Pancreas (tissue), 10 donors: ENCODE measurements at regions of chr17 and their contacts with region 1.

Region 1: DNA sequence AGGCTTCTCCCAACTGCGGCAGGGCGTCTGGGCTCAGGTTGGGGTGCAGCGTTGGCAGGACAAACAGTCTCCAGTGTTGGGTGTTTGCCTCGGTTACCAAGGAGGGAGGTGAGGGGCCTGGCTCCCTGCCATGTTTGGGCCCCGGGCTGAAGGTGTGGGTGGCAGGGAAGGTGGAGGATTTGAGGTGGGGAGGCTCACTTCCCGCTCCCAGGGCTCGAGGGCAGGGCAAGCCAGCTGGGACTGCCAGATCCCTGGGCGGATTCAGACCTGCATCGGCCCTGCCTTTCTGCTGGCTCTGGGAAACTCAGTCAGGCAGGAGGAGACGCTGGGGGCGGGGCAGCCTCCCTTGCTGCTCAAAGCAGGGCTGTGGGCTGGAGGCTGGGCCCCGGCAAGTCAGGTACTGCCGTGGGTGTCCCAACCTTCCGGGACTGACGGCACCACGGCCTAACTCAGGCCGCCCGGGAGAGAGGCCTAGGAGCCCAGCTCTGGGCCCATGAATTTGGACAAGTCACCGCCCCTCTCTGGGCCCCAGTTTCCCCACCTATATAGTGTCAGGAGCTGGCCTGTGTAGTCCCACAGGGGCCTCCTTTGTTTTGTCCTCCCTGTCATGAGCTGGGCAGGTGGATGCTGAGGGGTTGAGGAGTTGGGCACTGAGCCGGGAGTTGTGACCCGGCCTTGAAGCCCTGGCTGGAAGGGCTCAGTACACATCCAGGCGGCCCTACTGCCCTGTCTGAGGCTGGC is 31.4 kb upstream of the KRT17 start:
- DNase-seq: peak in 5 of 6 donors; percentile 39 to 86 (median 47)
- ATAC-seq: peak; percentile 24 to 61 (median 46)
- H3K4me3 ChIP-seq: no peak overlapping the region
- H3K27ac ChIP-seq: peak overlapping the region; percentile 50 to 69 (median 56)
- H3K4me1 ChIP-seq: no peaks in the 10 kb centered on the region
- H3K27me3 ChIP-seq: no peaks in the 10 kb centered on the region
- CTCF ChIP-seq: no peak

Region 2: DNA sequence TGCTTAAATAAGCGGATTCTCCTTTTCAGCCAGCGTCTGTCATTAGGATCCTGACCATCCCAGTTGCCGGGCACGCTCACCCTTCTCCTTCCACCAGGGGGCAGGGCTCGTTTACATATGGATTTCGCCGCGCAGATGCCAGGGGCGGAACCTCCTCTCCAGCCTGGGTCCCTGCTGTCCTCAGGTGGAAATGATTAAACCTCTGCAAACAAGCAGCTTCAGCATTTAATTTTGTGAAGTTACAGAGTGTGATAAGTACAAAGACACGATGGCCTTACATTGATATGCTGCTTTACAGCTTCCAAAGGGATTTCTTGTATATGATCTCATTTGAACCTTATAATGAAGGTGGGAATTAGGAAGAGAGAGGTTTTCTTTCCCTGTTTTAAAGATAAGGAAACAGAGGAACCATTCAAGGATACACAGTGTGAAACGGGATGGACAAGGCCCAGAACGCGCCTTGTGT is 852.1 kb before region 1 on chr17:
- intact Hi-C with region 1: loop called in 1 of 3 experiments (anchors 10 kb)
- DNase-seq: peak; percentile 52 to 87 (median 76)
- ATAC-seq: peak; percentile 90 to 100 (median 100)
- H3K4me3 ChIP-seq: no peak overlapping the region
- H3K27ac ChIP-seq: no peak overlapping the region
- H3K4me1 ChIP-seq: peaks cover 0 to 4% (median 0%) of the 10 kb centered on the region in 3 donors
- H3K27me3 ChIP-seq: peaks cover 0 to 35% (median 0%) of the 10 kb centered on the region in 4 donors
- CTCF ChIP-seq: peak; percentile 62 to 81 (median 70)

Region 3: DNA sequence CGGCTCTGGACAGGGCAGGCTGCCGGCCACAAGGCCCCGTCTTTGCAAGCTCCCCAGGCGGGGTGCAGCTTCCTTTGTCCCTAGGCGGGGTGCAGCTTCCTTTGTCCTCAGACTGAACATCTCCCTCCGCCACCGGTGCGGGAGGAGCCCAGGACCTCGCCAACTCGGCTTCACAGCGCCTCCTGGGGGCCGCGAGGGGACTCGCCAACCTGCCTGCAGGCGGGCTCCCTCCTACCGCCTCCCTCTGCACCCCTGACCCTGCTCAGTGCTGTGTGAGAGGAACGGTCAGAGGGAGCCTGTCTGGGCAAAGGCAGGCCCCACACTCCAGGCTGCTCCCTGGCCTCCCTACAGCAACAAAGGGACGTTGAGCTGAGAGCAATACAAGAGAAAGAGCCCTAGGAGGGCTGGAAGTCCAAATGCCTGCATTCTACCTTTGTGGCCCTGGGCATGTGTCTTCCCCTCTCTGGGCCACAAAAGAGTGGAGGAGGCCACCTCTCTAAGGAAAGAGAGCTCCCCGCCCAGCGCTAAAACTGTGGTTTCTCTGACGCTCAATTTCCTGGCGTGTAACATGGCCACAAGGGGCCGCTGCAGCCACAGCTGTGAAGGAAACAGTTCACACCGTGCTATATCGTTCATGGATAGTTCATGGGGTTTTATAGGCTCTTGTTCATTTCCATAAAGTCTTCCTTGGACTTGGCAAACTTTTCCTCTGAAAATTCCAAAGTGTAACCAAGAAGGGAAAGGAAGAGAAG is 106.8 kb before region 1 on chr17:
- intact Hi-C with region 1: loop called in 1 of 3 experiments (anchors 5 kb)
- DNase-seq: peak; percentile 67 to 91 (median 80)
- ATAC-seq: peak; percentile 89 to 93 (median 92)
- H3K4me3 ChIP-seq: peak overlapping the region in 2 of 4 donors; percentile 3 to 30
- H3K27ac ChIP-seq: peak overlapping the region in 2 of 4 donors; percentile 58 to 63
- H3K4me1 ChIP-seq: peaks cover 0 to 14% (median 7%) of the 10 kb centered on the region in 3 donors
- H3K27me3 ChIP-seq: no peaks in the 10 kb centered on the region
- CTCF ChIP-seq: peak; percentile 70 to 90 (median 78)

Region 4: GRCh38 chr17:41583137-41584127 is 72.3 kb before region 1 on chr17:
- intact Hi-C with region 1: no loop called
- DNase-seq: peak in 4 of 6 donors; percentile 30 to 70 (median 55)
- ATAC-seq: no peak
- H3K4me3 ChIP-seq: no peak overlapping the region
- H3K27ac ChIP-seq: no peak overlapping the region
- H3K4me1 ChIP-seq: no peaks in the 10 kb centered on the region
- H3K27me3 ChIP-seq: no peaks in the 10 kb centered on the region
- CTCF ChIP-seq: no peak

Region 5: GRCh38 chr17:41738077-41738735 is 82.4 kb after region 1 on chr17:
- intact Hi-C with region 1: no loop called
- DNase-seq: peak; percentile 71 to 95 (median 88)
- ATAC-seq: peak; percentile 88 to 94 (median 91)
- H3K4me3 ChIP-seq: no peak overlapping the region
- H3K27ac ChIP-seq: no peak overlapping the region
- H3K4me1 ChIP-seq: peaks cover 7 to 13% (median 11%) of the 10 kb centered on the region in 3 donors
- H3K27me3 ChIP-seq: peaks cover 0 to 19% (median 3%) of the 10 kb centered on the region in 4 donors
- CTCF ChIP-seq: peak; percentile 94 to 99 (median 98)